Left colon (tissue), 2 donors: ENCODE measurements at regions of chr14 and their contacts with region 1.

Region 1: DNA sequence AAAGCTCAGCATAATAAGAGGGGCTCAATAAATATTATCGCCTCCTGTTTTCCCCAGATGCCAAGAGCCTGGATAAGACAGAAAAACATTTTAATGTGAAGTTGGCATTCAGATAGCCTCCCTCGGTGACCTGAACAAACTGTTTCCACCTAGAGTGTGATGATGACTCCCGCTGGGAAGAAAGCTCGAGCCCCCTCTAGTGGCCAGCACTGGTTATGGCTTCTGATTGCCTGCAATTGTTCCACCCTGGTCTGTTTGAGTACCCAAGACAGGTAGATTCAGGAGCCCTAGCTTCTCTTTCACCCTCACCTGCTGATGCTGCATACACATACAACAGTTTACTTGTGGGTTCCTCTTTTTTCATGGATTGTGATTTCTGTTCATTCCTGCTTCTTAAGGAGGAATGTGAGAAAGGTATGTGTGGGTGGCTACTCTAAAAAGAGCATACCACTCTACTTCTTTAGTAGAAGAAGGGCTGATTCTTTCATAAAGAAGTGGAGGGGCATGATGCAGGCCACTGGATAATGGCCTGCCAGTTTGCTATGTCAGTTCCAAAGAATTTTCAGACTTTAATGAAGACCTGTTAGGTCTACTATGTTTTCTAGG is 6.4 kb downstream of the ERG28 start:
- DNase-seq: peak; percentile 55 to 84
- ATAC-seq: peak; percentile 83

Region 2: GRCh38 chr14:75577729-75578101 is 76.5 kb before region 1 on chr14:
- intact Hi-C with region 1: loop called (anchors 2 to 5 kb)
- DNase-seq: peak; percentile 85 to 92
- ATAC-seq: peak; percentile 72

Region 3: GRCh38 chr14:76063327-76063726 is 409.1 kb after region 1 on chr14:
- intact Hi-C with region 1: no loop called
- DNase-seq: no peak
- ATAC-seq: no peak